Activated naive CD4-positive, alpha-beta T cell treated with anti-CD3 and anti-CD28 coated beads for 36 hours (primary cell): ENCODE measurements at regions of chr2 and their contacts with region 1.

Region 1: DNA sequence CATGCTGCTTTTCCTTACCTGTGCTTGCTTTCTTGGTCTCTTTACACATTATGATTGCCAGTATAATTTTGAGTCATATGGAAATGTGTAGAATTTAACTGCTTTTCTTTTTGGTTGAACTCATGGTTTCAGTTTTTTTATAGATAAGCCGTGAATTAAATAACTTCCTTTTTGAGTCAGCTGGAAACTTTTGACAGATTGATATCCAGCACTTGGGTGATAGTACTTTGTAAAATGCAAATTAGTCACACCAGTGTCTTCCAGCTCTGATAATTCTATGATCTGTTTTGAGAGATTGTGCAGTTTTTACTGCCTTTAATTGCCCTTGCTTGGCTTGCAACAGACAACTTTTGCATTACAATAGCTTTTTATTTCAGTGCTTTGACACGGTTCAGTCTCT is 86.4 kb downstream of the NCOA1 start:
- DNase-seq: no peak
- H3K4me3 Mint-ChIP-seq: no peak overlapping the region
- H3K27ac Mint-ChIP-seq: peak overlapping the region; percentile 69
- H3K4me1 Mint-ChIP-seq: peaks cover 74% of the 10 kb centered on the region
- H3K27me3 Mint-ChIP-seq: no peaks in the 10 kb centered on the region

Region 2: GRCh38 chr2:24490674-24491625 is 86.5 kb before region 1 on chr2 and contains the start of gene NCOA1:
- CTCF ChIA-PET with region 1: interaction called, 3 read pairs
- intact Hi-C with region 1: loop called (anchors 1 kb)
- DNase-seq: peak; percentile 95
- H3K4me3 Mint-ChIP-seq: peak within 1 kb of the TSS; percentile 89
- H3K27ac Mint-ChIP-seq: peak within 1 kb of the TSS; percentile 95
- H3K4me1 Mint-ChIP-seq: peaks cover 47% of the 10 kb centered on the region
- H3K27me3 Mint-ChIP-seq: no peaks in the 10 kb centered on the region
- total RNA-seq, gene NCOA1: 14.0 to 15.4 TPM

Region 3: DNA sequence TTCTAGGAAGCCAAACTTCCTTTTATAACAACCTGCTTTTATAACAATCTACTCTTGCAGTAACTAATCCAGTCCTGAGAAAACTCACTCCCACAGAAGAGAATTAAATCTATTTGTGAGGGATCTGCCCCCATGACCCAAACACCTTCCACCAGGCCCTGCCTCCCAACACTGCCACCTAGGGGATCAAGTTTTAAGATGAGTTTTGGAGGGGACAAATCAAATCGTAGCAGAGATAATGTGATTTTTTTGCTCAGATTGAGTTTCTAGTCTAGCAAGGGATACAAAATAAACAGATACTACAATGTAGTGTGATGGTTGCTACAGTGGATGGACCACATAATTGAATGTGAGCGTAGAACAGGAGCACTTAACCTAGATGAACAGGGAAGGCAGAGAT is 34.2 kb before region 1 on chr2:
- CTCF ChIA-PET with region 1: no interaction called
- intact Hi-C with region 1: loop called (anchors 2 kb)
- DNase-seq: no peak
- H3K4me3 Mint-ChIP-seq: no peak overlapping the region
- H3K27ac Mint-ChIP-seq: no peak overlapping the region
- H3K4me1 Mint-ChIP-seq: peaks cover 12% of the 10 kb centered on the region
- H3K27me3 Mint-ChIP-seq: no peaks in the 10 kb centered on the region

Region 4: DNA sequence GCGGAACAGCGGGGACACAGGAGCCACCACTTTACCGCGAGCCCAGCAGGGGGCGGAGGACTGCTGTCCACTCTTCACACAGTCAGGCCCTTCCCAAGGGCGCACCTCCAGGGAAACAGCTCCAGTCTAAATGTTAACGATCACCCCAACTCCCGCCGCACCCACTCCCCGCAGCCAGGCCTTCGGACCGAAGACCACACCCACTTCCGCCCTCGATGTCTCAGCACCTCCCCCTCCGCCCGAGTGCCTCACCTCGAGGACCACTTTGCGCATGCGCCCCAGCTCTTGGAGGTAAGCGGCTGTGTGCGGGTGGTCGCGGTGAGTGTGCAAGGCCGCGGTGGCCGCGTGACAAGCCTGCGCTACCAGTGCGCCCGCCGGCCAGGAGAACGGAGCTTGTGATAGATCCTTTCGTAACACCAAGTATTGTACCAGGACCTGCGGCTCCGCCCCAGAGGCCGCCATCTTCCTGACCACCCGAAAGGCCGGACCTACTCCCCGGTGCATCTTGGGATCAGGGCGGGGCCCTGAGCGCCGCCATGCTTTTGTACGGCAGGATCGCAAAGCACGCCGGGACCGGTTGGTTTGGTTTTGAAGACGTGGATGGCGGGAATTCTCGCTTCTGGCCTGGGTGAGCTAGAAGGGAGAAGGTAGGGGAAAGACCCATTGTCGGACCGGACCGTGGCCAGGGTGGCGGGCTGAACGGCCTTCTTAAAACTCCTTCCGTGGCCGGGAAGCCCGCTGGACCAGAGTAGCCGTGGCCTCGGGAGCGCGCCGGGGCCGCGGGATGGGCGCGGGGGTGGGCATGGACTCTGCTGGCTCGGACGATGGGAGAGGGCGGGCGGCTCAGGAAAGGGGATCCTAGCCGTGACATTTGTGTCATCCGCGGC is 215.6 kb after region 1 on chr2 and contains the starts of genes CENPO and PTRHD1:
- CTCF ChIA-PET with region 1: no interaction called
- intact Hi-C with region 1: loop called (anchors 1 kb)
- DNase-seq: peak; percentile 97
- H3K4me3 Mint-ChIP-seq: peak within 1 kb of the TSS; percentile 97
- H3K27ac Mint-ChIP-seq: peak within 1 kb of the TSS; percentile 99
- H3K4me1 Mint-ChIP-seq: peaks cover 40% of the 10 kb centered on the region
- H3K27me3 Mint-ChIP-seq: no peaks in the 10 kb centered on the region
- total RNA-seq, gene CENPO: 36.4 to 38.5 TPM
- total RNA-seq, gene PTRHD1: 21.7 to 23.5 TPM

Region 5: GRCh38 chr2:25041928-25042320 is 464.4 kb after region 1 on chr2 and contains the start of gene EFR3B:
- CTCF ChIA-PET with region 1: no interaction called
- intact Hi-C with region 1: loop called (anchors 10 kb)
- DNase-seq: peak; percentile 92
- H3K4me3 Mint-ChIP-seq: peak within 1 kb of the TSS; percentile 77
- H3K27ac Mint-ChIP-seq: no peak within 1 kb of the TSS
- H3K4me1 Mint-ChIP-seq: peaks cover 29% of the 10 kb centered on the region
- H3K27me3 Mint-ChIP-seq: peaks cover 36% of the 10 kb centered on the region
- total RNA-seq, gene EFR3B: 0.41 to 0.42 TPM